ENCODE measurements at regions of chr2 and their contacts with region 1.

Region 1: DNA sequence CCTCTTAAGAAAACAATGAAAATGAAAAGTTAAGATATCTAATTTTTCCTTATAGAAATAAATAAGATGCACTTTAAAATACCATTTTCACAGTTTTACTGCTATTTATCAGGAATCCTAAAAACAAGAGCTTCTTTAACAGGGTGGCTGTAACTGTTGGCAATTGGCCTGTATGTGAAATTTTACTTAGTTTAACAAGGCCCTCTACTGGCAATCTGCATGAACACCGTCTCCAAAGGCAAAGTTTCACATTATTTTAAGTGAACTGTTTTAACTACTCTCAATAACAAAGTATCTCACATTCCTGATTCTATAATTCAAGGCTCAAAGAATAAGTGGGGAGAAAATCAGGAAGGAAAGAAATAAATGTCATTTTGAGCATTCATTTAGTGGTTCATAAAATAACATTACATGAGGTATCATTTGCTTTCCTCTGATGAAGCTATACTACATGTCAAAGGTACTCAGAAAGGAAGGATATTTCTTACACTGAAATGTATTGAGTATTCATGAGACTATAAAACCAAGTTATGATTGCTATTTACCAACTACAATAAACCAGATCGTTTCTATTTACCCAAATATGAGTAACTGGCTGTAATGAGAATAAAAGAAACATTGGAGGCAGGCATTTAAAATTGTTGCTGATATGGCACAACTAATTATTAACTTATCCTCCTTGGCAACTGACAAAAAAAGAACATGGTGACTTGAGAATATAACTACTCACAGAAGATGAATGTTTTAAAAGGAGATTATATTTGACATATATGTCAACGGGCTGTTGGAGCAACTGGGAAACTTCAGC is 7.0 kb downstream of the NCKAP5 start:
- DNase-seq: peak; percentile 28
- H3K27ac ChIP-seq: no peak overlapping the region
- CTCF ChIP-seq: peak; percentile 76

Region 2: DNA sequence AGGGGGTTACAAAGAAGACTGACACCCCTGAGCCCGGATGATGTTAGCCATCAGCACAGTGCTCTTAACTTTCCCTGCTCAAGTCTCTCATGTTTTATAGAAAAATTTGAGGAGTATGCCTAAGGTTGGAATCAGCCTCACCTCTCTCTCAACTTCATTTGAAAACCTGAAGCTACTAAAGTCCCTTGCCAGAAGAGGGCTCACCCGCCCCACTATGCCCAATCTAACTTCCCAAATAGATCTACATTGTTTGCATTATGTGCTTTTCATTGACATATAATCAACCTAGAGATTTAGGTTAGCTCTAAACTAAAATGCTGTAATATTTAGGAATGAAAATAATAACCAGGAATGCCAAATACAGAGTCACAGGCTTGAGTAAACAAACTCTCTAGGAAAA is 298.4 kb before region 1 on chr2:
- CTCF ChIA-PET with region 1: interaction called, 23 read pairs
- POLR2A ChIA-PET with region 1: no interaction called
- DNase-seq: no peak
- H3K27ac ChIP-seq: no peak overlapping the region
- CTCF ChIP-seq: peak; percentile 37; the same call in 1 of the 2 replicates

Region 3: GRCh38 chr2:133591164-133591563 is 29.9 kb after region 1 on chr2:
- CTCF ChIA-PET with region 1: no interaction called
- POLR2A ChIA-PET with region 1: no interaction called
- DNase-seq: no peak
- H3K27ac ChIP-seq: no peak overlapping the region
- CTCF ChIP-seq: no peak